Right cardiac atrium (tissue), 5 donors: ENCODE measurements at regions of chr5 and their contacts with region 1.

Region 1: GRCh38 chr5:57724836-57725235 is 242.2 kb upstream of the ACTBL2 start:
- DNase-seq: no peak
- ATAC-seq: no peak
- H3K4me3 ChIP-seq: no peak overlapping the region
- H3K27ac ChIP-seq: no peak overlapping the region
- H3K4me1 ChIP-seq: no peaks in the 10 kb centered on the region
- H3K27me3 ChIP-seq: no peaks in the 10 kb centered on the region

Region 2: GRCh38 chr5:57592236-57592635 is 132.6 kb before region 1 on chr5:
- intact Hi-C with region 1: loop called in 1 of 4 experiments (anchors 5 kb)
- DNase-seq: no peak
- ATAC-seq: no peak
- H3K4me3 ChIP-seq: no peak overlapping the region
- H3K27ac ChIP-seq: no peak overlapping the region
- H3K4me1 ChIP-seq: no peaks in the 10 kb centered on the region
- H3K27me3 ChIP-seq: no peaks in the 10 kb centered on the region

Region 3: GRCh38 chr5:57745700-57746651 is 21.1 kb after region 1 on chr5:
- intact Hi-C with region 1: loop called in 1 of 4 experiments (anchors 2 kb)
- DNase-seq: no peak
- ATAC-seq: no peak
- H3K4me3 ChIP-seq: no peak overlapping the region
- H3K27ac ChIP-seq: no peak overlapping the region
- H3K4me1 ChIP-seq: no peaks in the 10 kb centered on the region
- H3K27me3 ChIP-seq: no peaks in the 10 kb centered on the region